ENCODE measurements at regions of chr4 and their contacts with region 1.

Region 1: GRCh38 chr4:30380404-30380998 is 339.7 kb upstream of the PCDH7 start:
- DNase-seq: peak; percentile 79
- ATAC-seq: peak; percentile 51; the same call in 1 of the 2 replicates
- H3K4me3 ChIP-seq: peak overlapping the region; percentile 26; the same call in 1 of the 2 replicates
- H3K27ac ChIP-seq: no peak overlapping the region
- H3K4me1 ChIP-seq: peaks cover 3% of the 10 kb centered on the region; the same call in 1 of the 2 replicates
- H3K27me3 ChIP-seq: no peaks in the 10 kb centered on the region
- CTCF ChIP-seq: peak; percentile 83

Region 2: DNA sequence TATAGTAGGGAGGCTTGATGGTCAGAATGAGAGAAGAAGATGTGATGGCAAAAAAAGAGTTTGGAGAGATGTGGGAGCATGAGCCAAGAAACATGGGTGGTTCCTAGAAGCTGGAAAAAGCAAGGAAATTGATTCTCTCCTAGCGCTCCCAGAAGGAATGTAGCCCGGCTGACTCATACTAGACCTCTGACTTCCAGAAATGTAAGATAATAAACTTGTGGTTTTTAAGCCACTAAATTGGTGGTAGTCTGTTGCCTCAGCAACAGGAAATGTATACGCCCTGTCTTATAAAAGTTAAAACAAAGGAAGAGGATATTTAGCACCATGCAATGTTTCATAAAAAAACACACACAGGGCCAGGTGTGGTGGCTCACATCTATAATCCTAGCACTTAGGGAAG is 157.0 kb after region 1 on chr4:
- CTCF ChIA-PET with region 1: no interaction called
- POLR2A ChIA-PET with region 1: no interaction called
- intact Hi-C with region 1: loop called (anchors 5 kb)
- DNase-seq: peak; percentile 85
- ATAC-seq: peak; percentile 92
- H3K4me3 ChIP-seq: no peak overlapping the region
- H3K27ac ChIP-seq: no peak overlapping the region
- H3K4me1 ChIP-seq: peaks cover 13% of the 10 kb centered on the region
- H3K27me3 ChIP-seq: no peaks in the 10 kb centered on the region
- CTCF ChIP-seq: no peak

Region 3: DNA sequence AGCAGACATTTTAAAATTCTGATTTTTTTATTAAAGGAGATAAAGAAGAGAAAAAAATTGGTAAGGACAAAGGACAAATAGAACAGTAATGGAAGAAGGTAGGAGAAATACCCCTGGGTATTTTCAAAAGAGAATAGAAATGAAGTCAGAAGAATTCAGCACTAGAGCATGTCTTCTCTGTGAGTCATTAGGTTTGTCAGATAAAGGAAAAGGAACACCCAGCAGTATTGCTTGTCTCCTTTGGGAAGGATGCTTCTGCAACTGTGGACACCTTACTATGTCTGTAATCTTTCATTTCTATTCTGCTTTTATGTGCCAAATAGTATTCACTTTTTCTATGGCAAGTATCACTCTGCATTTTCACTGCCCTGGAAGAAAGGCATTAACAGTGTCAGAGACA is 315.7 kb after region 1 on chr4:
- CTCF ChIA-PET with region 1: no interaction called
- POLR2A ChIA-PET with region 1: no interaction called
- intact Hi-C with region 1: loop called (anchors 5 kb)
- DNase-seq: no peak
- ATAC-seq: no peak
- H3K4me3 ChIP-seq: no peak overlapping the region
- H3K27ac ChIP-seq: no peak overlapping the region
- H3K4me1 ChIP-seq: no peaks in the 10 kb centered on the region
- H3K27me3 ChIP-seq: no peaks in the 10 kb centered on the region
- CTCF ChIP-seq: no peak